Dorsolateral prefrontal cortex (tissue), 120 donors: ENCODE measurements at regions of chr2 and their contacts with region 1.

Region 1: DNA sequence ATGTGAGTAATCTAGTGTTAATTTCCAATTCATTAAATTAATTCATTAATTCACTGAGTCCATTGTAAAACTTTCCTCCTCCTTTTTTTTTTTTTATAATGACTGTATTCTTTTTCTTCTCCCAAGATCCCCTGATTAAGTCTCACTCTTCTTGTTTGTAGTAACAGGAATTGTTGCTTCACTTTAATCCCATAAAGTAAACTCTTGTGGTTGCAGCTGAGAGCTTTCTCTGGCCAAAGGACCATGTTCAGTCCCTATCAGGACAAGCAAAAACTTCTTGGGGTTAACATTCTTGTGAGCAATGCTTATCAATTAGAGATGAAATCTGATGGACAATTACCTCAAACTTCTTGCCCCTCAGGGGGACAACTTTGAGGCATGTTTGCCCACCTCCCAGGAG is 400.2 kb upstream of the SPHKAP start:
- DNase-seq: no peak
- H3K4me3 ChIP-seq: no peak overlapping the region
- H3K27ac ChIP-seq: no peak overlapping the region
- H3K27me3 ChIP-seq: no peaks in the 10 kb centered on the region
- CTCF ChIP-seq: no peak

Region 2: GRCh38 chr2:228549436-228550007 is 32.2 kb before region 1 on chr2:
- intact Hi-C with region 1: loop called in 1 of 2 experiments (anchors 2 kb)
- DNase-seq: no peak
- H3K4me3 ChIP-seq: no peak overlapping the region
- H3K27ac ChIP-seq: no peak overlapping the region
- H3K27me3 ChIP-seq: peaks cover 0 to 2% (median 0%) of the 10 kb centered on the region in 45 donors
- CTCF ChIP-seq: no peak

Region 3: GRCh38 chr2:228628682-228629081 is 47.0 kb after region 1 on chr2:
- intact Hi-C with region 1: no loop called
- DNase-seq: peak in 1 of 10 donors; percentile 36
- H3K4me3 ChIP-seq: no peak overlapping the region
- H3K27ac ChIP-seq: no peak overlapping the region
- H3K27me3 ChIP-seq: no peaks in the 10 kb centered on the region
- CTCF ChIP-seq: no peak

Region 4: GRCh38 chr2:229044581-229044980 is 462.9 kb after region 1 on chr2:
- intact Hi-C with region 1: no loop called
- DNase-seq: no peak
- H3K4me3 ChIP-seq: no peak overlapping the region
- H3K27ac ChIP-seq: no peak overlapping the region
- H3K27me3 ChIP-seq: no peaks in the 10 kb centered on the region
- CTCF ChIP-seq: no peak